BJ (cell line): ENCODE measurements at regions of chr12 and their contacts with region 1.

Region 1: GRCh38 chr12:121802846-121803630 is 771 bp upstream of the SETD1B start:
- DNase-seq: peak; percentile 90
- H3K4me3 ChIP-seq: peak overlapping the region; percentile 79
- H3K27me3 ChIP-seq: no peaks in the 10 kb centered on the region
- CTCF ChIP-seq: peak; percentile 18; the same call in 1 of the 2 replicates

Region 2: DNA sequence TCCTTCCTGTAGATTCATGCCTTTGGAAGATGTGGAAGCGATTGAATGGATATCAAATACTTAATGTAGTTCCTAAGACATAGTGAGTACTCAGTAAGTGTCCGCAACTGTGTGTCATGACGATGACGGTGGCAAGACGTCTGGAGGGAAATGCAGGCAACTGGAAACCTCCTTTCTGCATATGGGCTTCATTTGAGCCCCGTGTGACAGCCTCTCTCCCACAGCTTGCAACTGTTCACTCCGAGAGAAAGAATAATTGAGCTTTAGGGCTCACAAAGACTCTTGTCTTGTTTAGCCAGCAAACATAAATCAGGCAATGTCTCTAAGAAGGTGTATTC is 122.3 kb after region 1 on chr12:
- CTCF ChIA-PET with region 1: no interaction called
- POLR2A ChIA-PET with region 1: interaction called, 10 read pairs
- DNase-seq: peak; percentile 59
- H3K4me3 ChIP-seq: peak overlapping the region; percentile 12; the same call in 1 of the 2 replicates
- H3K27me3 ChIP-seq: no peaks in the 10 kb centered on the region
- CTCF ChIP-seq: no peak